Left cardiac atrium (tissue), 4 donors: ENCODE measurements at regions of chr22 and their contacts with region 1.

Region 1: GRCh38 chr22:41285820-41286638 is at the start of gene RANGAP1:
- DNase-seq: peak; percentile 98
- ATAC-seq: peak; percentile 99
- total RNA-seq, gene RANGAP1: 33.7 to 34.0 TPM

Region 2: DNA sequence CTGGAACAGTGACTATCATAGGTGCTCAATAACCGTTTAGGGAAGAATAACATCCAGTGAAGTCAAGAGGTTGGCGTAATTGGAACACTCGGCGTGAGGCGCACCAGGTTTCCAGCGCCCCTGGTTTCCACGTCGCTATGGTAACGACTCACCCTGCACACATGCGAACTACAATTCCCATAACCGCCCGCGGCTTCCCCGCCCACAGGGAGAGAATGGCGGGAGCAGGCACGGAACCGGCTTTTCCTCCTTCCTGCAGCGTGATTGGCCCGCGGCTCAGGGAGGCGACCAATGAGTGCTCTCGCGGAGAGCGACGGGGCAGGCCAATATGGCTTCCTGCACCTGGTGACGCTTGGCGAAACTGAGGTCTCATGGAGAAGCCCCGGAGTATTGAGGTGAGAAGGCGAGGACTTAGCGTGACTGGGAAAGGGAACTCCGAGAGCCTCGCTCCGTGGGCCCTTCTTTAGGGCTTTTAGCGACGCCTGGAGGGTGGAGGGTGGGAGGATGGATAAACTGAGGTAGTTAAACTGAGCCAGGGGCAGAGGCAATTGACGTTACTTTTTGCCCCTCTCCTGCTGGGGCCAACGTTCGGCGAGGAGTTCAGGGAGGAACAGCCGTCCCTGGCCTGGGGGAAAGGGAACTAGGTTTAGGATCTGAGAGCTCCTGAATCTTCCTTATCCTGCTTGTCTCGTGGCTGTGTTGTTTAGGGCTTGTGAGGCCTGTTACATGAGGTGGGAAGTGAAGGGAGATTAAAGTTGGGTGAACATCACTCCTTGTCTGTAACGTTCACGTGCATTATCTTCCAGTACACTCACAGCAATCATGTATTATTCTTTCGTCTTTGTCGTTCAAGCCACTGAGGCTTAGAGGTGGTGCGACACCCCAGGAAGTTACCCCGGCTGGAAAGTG is 80.8 kb before region 1 on chr22 and contains the start of gene L3MBTL2:
- intact Hi-C with region 1: loop called in 1 of 2 experiments (anchors 5 kb)
- DNase-seq: peak; percentile 98
- ATAC-seq: peak; percentile 100
- total RNA-seq, gene L3MBTL2: 13.6 to 15.4 TPM

Region 3: DNA sequence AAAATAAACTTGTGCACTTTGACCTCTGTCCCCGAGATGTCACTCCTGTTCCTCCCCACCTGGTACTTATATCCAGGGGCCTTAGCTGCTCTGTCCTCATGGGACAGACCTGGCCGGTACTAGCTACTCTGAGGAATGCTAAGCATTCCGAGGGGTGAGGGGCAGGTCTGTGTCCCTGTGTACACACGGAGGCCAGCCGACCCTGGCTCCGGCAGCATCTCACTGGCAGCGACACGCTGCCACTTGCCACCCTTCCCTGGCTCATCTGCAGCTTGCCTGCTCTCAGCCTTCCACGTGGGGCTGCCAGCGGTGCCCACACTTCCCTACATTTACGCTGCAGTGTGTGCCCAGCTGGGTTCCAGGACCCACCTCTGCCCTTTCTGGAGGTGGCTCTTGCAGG is 74.1 kb after region 1 on chr22:
- intact Hi-C with region 1: no loop called
- DNase-seq: no peak
- ATAC-seq: peak; percentile 6 to 44